OCI-LY7 (cell line): ENCODE measurements at regions of chr17 and their contacts with region 1.

Region 1: DNA sequence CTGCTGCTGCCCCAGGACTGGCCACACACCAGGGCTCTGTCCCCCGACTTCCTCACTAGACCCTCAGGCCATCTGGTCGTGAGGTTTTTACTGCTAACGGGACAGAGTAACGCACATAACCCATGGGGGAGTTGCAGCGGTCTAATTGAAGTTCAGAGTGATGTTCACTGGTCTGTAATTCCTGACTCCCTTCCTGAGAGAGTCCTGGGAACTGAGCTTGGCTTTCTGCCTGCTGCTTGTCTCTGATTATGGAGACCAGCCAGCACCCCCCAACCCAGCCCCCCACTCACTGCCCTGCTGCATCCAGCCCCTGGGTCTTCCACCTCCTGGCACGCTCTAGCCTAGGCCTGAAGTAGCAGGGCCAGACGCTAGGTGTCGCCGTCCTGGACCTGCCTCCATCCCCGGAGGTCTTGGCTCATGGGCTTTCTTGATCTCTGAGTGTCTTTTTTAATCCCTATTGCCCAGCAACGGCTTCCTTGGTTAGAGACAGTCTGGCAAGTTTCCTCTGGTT is 192.9 kb downstream of the CCDC182 start:
- DNase-seq: peak; percentile 94
- H3K4me3 ChIP-seq: peak overlapping the region; percentile 62
- H3K27ac ChIP-seq: peak overlapping the region; percentile 99
- H3K4me1 ChIP-seq: peaks cover 93% of the 10 kb centered on the region
- CTCF ChIP-seq: peak; percentile 90

Region 2: DNA sequence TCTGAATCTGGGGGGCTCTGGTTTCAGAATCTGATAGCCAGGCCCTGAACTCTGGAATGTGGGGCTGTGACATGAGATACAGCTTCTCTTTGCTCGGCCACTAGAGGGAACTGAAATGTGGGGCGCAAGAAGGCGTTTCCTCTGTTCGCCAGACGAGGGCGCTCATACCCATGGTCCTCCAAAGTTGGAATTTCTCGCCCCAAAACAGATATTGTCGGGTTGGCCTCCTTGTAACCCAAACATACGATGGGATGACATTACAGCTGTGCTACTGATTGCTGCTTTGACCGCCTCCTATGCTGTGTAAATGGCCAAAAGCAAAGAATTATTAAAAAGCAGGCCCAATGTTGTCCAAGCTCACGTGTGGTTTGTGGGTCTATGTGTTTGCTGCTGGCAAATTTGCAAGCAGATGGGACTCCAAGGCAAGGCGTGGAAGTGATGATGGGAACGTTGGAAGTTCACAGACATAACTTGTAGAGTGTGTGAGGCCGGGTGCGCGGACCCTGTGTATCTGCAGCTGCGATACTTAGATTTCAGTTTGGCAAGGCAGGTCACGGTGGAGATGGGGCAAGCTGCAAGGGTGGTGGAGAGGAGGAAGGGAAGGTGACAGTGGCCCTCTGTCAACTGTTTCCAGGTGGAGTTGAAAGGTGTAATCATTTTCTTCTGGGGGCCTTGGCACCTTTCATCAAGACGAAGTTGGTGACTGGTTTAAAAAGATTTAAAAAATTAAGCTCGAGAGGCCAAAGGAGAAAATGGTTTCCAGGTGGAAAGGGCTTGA is 308.8 kb before region 1 on chr17:
- CTCF ChIA-PET with region 1: interaction called, 4 read pairs
- POLR2A ChIA-PET with region 1: interaction called, 4 read pairs
- intact Hi-C with region 1: loop called (anchors 1 kb)
- DNase-seq: peak; percentile 85
- H3K4me3 ChIP-seq: no peak overlapping the region
- H3K27ac ChIP-seq: no peak overlapping the region
- H3K4me1 ChIP-seq: peaks cover 19% of the 10 kb centered on the region
- CTCF ChIP-seq: peak; percentile 100

Region 3: DNA sequence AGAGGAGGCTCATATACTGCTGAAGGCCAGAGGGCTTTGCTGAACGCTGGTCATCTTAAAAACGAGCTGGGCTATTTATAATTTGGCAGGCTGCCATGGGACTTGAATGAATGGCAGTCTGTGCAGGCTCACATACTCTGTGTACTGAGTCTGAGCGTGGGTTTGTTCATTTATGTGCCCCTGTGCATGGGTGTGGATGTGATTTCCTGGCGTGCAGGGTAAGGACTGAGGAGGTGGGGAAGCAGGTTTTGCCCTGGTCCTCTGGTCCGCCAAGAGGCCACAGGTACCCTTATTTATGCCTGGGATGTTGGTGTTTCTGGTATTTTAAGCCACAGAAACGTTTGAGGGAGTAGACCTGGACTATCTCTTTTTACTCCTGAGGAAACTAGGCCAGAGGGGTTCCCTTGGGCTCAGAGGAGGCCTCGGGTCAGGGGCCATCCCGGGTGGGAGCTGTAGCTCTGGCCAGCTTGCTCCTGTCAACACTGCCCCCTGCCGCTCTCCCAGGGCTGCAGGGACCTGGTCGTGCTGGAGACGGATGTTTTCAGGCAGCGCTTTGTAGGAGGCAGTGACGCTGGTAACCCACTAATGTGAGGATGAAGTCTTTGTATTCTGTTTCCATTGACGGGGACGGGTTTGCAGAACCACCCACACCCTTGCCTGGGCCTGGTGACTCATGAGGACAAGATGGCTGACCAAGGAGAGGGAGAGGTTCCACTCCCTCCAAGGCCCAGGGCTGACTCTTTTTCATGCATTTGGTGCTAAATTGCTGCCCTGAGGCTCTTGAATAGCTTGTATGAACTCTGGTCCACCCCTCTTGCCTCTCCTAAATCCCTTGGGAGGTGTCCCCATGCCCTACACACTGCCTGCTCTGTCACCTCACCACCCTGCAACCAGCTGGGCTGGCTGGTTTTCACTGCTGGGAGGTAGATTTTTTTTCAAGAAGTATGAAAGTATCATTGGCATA is 111.4 kb before region 1 on chr17:
- CTCF ChIA-PET with region 1: interaction called, 4 read pairs
- POLR2A ChIA-PET with region 1: interaction called, 7 read pairs
- intact Hi-C with region 1: loop called (anchors 1 kb)
- DNase-seq: peak; percentile 66
- H3K4me3 ChIP-seq: no peak overlapping the region
- H3K27ac ChIP-seq: peak overlapping the region; percentile 82
- H3K4me1 ChIP-seq: peaks cover 62% of the 10 kb centered on the region
- CTCF ChIP-seq: peak; percentile 78

Region 4: GRCh38 chr17:57480438-57481196 is 71.6 kb before region 1 on chr17:
- CTCF ChIA-PET with region 1: no interaction called
- POLR2A ChIA-PET with region 1: no interaction called
- intact Hi-C with region 1: no loop called
- DNase-seq: no peak
- H3K4me3 ChIP-seq: no peak overlapping the region
- H3K27ac ChIP-seq: no peak overlapping the region
- H3K4me1 ChIP-seq: peaks cover 11% of the 10 kb centered on the region
- CTCF ChIP-seq: no peak

Region 5: GRCh38 chr17:57589151-57590034 is 37.2 kb after region 1 on chr17:
- CTCF ChIA-PET with region 1: no interaction called
- POLR2A ChIA-PET with region 1: no interaction called
- intact Hi-C with region 1: no loop called
- DNase-seq: no peak
- H3K4me3 ChIP-seq: no peak overlapping the region
- H3K27ac ChIP-seq: no peak overlapping the region
- H3K4me1 ChIP-seq: peaks cover 11% of the 10 kb centered on the region
- CTCF ChIP-seq: no peak

Region 6: GRCh38 chr17:57604771-57605674 is 52.9 kb after region 1 on chr17:
- CTCF ChIA-PET with region 1: interaction called, 6 read pairs
- POLR2A ChIA-PET with region 1: interaction called, 5 read pairs
- intact Hi-C with region 1: loop called (anchors 1 kb)
- DNase-seq: peak; percentile 92
- H3K4me3 ChIP-seq: peak overlapping the region; percentile 4
- H3K27ac ChIP-seq: peak overlapping the region; percentile 89
- H3K4me1 ChIP-seq: peaks cover 73% of the 10 kb centered on the region
- CTCF ChIP-seq: peak; percentile 67

Region 7: GRCh38 chr17:57671667-57672632 is 119.8 kb after region 1 on chr17:
- CTCF ChIA-PET with region 1: interaction called, 4 read pairs
- POLR2A ChIA-PET with region 1: no interaction called
- intact Hi-C with region 1: loop called (anchors 1 kb)
- DNase-seq: peak; percentile 88
- H3K4me3 ChIP-seq: peak overlapping the region; percentile 5
- H3K27ac ChIP-seq: peak overlapping the region; percentile 57
- H3K4me1 ChIP-seq: peaks cover 26% of the 10 kb centered on the region
- CTCF ChIP-seq: peak; percentile 97

Region 8: DNA sequence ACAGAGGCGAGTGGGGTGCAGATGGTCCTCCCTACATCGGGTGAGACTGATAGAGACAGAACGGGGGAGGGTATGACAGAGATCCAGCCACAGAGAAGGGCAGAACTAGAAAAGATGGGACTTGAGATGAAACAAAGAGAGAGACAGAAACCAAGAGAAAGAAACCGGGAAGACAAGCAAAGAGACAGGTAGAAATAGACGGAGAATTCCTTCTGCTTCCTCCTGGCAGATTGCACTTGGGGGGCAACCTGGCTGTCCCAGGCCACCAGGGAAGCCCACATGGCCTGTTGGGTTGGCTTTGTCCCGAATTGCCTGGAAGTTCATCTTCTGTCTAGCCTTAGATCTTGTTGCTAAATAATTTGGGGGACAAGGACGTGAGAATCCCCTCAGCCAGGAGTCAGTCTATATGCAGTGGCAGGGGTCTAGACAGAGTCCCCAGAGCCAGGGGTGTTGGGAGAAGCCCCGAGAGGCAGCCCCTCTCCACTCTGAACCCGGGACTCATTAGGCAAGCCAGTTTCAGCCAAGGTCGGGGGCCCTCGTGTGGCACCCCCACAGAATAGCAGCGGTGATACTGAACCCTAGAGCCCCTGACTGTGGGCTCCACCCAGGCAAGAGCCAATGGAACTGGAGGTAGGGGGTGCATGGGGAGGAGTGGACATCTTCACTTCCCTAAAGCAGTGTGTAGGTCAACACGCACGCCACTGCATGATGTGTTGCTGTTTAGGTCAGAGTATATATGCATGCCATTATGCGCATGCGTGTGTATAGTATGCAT is 777.1 kb after region 1 on chr17:
- CTCF ChIA-PET with region 1: no interaction called
- POLR2A ChIA-PET with region 1: no interaction called
- intact Hi-C with region 1: loop called (anchors 5 kb)
- DNase-seq: peak; percentile 92
- H3K4me3 ChIP-seq: peak overlapping the region; percentile 98
- H3K27ac ChIP-seq: peak overlapping the region; percentile 99
- H3K4me1 ChIP-seq: peaks cover 55% of the 10 kb centered on the region
- CTCF ChIP-seq: peak; percentile 78